CD4-positive, alpha-beta T cell (primary cell): ENCODE measurements at regions of chr6 and their contacts with region 1.

Region 1: DNA sequence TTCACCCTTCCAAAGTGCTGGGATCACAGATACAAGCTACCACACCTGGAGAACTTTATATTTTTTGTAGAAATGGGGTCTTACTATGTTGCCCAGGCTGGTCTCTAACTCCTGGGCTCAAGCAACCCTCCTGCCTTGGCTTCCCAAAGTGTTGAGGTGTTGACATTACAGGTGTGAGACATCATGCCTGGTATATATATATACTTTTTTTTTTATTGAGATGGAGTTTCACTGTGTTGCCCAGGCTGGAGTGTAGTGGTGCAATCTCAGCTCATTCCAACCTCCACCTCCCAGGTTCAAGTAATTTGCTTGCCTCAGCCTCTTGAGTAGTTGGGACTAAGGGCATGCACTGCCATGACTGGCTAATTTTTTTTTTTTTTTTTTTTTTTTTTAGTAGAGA is 5.4 kb downstream of the FKBP5 start:
- DNase-seq: no peak
- ATAC-seq: no peak
- H3K4me3 ChIP-seq: no peak overlapping the region
- H3K4me3 Mint-ChIP-seq: no peak overlapping the region
- H3K27ac ChIP-seq: no peak overlapping the region
- H3K27ac Mint-ChIP-seq: peak overlapping the region; percentile 59
- H3K4me1 ChIP-seq: peaks cover 36% of the 10 kb centered on the region
- H3K4me1 Mint-ChIP-seq: peaks cover 58% of the 10 kb centered on the region
- H3K27me3 ChIP-seq: no peaks in the 10 kb centered on the region
- H3K27me3 Mint-ChIP-seq: no peaks in the 10 kb centered on the region
- CTCF ChIP-seq: no peak

Region 2: GRCh38 chr6:35648203-35648602 is 35.1 kb before region 1 on chr6:
- CTCF ChIA-PET with region 1: interaction called, 4 read pairs
- POLR2A ChIA-PET with region 1: interaction called, 5 read pairs
- intact Hi-C with region 1: loop called (anchors 2 to 5 kb)
- DNase-seq: no peak
- ATAC-seq: no peak
- H3K4me3 ChIP-seq: no peak overlapping the region
- H3K4me3 Mint-ChIP-seq: no peak overlapping the region
- H3K27ac ChIP-seq: no peak overlapping the region
- H3K27ac Mint-ChIP-seq: peak overlapping the region; percentile 91
- H3K4me1 ChIP-seq: peaks cover 19% of the 10 kb centered on the region
- H3K4me1 Mint-ChIP-seq: peaks cover 77% of the 10 kb centered on the region
- H3K27me3 ChIP-seq: no peaks in the 10 kb centered on the region
- H3K27me3 Mint-ChIP-seq: no peaks in the 10 kb centered on the region
- CTCF ChIP-seq: no peak